Activated B cell treated with CpG ODN at 0.5 μM for 24 hours (primary cell): ENCODE measurements at regions of chr10 and their contacts with region 1.

Region 1: GRCh38 chr10:52215745-52216361 is 98.2 kb upstream of the DKK1 start:
- DNase-seq: no peak
- ATAC-seq: peak; percentile 57
- H3K4me3 Mint-ChIP-seq: peak overlapping the region; percentile 41
- H3K27ac Mint-ChIP-seq: no peak overlapping the region
- H3K4me1 Mint-ChIP-seq: peaks cover 32% of the 10 kb centered on the region
- H3K27me3 Mint-ChIP-seq: no peaks in the 10 kb centered on the region
- CTCF ChIP-seq: peak; percentile 40

Region 2: GRCh38 chr10:51001587-51001986 is 1214.3 kb before region 1 on chr10:
- CTCF ChIA-PET with region 1: interaction called, 5 read pairs
- POLR2A ChIA-PET with region 1: no interaction called
- intact Hi-C with region 1: loop called (anchors 1 kb)
- DNase-seq: no peak
- ATAC-seq: no peak
- H3K4me3 Mint-ChIP-seq: no peak overlapping the region
- H3K27ac Mint-ChIP-seq: no peak overlapping the region
- H3K4me1 Mint-ChIP-seq: no peaks in the 10 kb centered on the region
- H3K27me3 Mint-ChIP-seq: peaks cover 3% of the 10 kb centered on the region
- CTCF ChIP-seq: no peak

Region 3: GRCh38 chr10:51010977-51011376 is 1204.9 kb before region 1 on chr10:
- CTCF ChIA-PET with region 1: interaction called, 5 read pairs
- POLR2A ChIA-PET with region 1: no interaction called
- intact Hi-C with region 1: loop called (anchors 1 kb)
- DNase-seq: no peak
- ATAC-seq: no peak
- H3K4me3 Mint-ChIP-seq: no peak overlapping the region
- H3K27ac Mint-ChIP-seq: no peak overlapping the region
- H3K4me1 Mint-ChIP-seq: peaks cover 16% of the 10 kb centered on the region
- H3K27me3 Mint-ChIP-seq: peaks cover 5% of the 10 kb centered on the region
- CTCF ChIP-seq: no peak

Region 4: GRCh38 chr10:51389415-51390321 is 826.2 kb before region 1 on chr10:
- CTCF ChIA-PET with region 1: interaction called, 15 read pairs
- POLR2A ChIA-PET with region 1: no interaction called
- intact Hi-C with region 1: loop called (anchors 1 kb)
- DNase-seq: no peak
- ATAC-seq: peak; percentile 42
- H3K4me3 Mint-ChIP-seq: no peak overlapping the region
- H3K27ac Mint-ChIP-seq: no peak overlapping the region
- H3K4me1 Mint-ChIP-seq: no peaks in the 10 kb centered on the region
- H3K27me3 Mint-ChIP-seq: no peaks in the 10 kb centered on the region
- CTCF ChIP-seq: no peak

Region 5: GRCh38 chr10:51699475-51700227 is 516.2 kb before region 1 on chr10 and contains the start of gene CSTF2T:
- CTCF ChIA-PET with region 1: no interaction called
- POLR2A ChIA-PET with region 1: no interaction called
- intact Hi-C with region 1: loop called (anchors 10 kb)
- DNase-seq: peak; percentile 81
- ATAC-seq: peak; percentile 90
- H3K4me3 Mint-ChIP-seq: peak within 1 kb of the TSS; percentile 99
- H3K27ac Mint-ChIP-seq: peak within 1 kb of the TSS; percentile 100
- H3K4me1 Mint-ChIP-seq: peaks cover 52% of the 10 kb centered on the region
- H3K27me3 Mint-ChIP-seq: no peaks in the 10 kb centered on the region
- CTCF ChIP-seq: no peak
- total RNA-seq, gene CSTF2T: 39.3 and 40.8 TPM in 2 replicates

Region 6: DNA sequence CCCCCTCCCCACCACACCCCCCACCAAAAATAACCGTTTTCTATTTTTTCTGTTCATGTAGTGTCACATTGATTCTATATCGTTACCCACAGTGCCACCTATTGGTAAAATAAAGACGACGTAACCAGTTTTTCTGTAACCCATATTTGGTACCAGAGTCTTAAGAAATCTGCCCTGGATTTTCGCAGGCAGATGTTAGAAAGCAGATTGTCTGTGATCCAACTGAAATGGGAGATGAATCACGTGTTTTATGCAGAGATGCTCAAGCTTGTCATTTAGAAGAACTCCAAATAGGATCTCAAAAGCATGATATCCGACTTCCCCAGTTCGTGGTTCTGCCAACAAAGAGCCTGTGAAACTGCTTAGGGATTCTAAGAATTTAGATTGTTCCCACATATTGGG is 255.4 kb before region 1 on chr10:
- CTCF ChIA-PET with region 1: interaction called, 3 read pairs
- POLR2A ChIA-PET with region 1: no interaction called
- intact Hi-C with region 1: loop called (anchors 1 kb)
- DNase-seq: no peak
- ATAC-seq: no peak
- H3K4me3 Mint-ChIP-seq: no peak overlapping the region
- H3K27ac Mint-ChIP-seq: no peak overlapping the region
- H3K4me1 Mint-ChIP-seq: no peaks in the 10 kb centered on the region
- H3K27me3 Mint-ChIP-seq: no peaks in the 10 kb centered on the region
- CTCF ChIP-seq: peak; percentile 43

Region 7: GRCh38 chr10:52050429-52051047 is 165.3 kb before region 1 on chr10:
- CTCF ChIA-PET with region 1: no interaction called
- POLR2A ChIA-PET with region 1: no interaction called
- intact Hi-C with region 1: no loop called
- DNase-seq: no peak
- ATAC-seq: no peak
- H3K4me3 Mint-ChIP-seq: no peak overlapping the region
- H3K27ac Mint-ChIP-seq: no peak overlapping the region
- H3K4me1 Mint-ChIP-seq: no peaks in the 10 kb centered on the region
- H3K27me3 Mint-ChIP-seq: no peaks in the 10 kb centered on the region
- CTCF ChIP-seq: no peak

Region 8: DNA sequence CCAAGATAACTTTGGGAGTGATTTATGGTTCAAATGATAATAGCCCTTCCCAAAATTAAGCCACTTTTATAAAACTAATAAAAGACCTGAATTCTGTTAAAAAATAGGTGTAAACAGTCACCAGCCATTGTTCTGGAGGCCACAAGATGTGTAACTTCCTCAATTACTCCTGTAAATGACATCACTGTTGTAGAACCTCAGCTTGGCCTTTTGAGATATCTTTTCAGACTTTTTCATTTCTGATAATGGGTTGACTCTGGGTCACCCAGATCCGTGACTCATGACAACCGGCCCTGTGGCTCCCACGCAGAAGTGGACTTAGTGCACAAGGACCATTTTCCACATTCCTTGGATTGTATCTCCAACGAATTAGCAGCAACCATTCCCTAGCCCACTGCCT is 204.8 kb after region 1 on chr10:
- CTCF ChIA-PET with region 1: no interaction called
- POLR2A ChIA-PET with region 1: no interaction called
- intact Hi-C with region 1: no loop called
- DNase-seq: no peak
- ATAC-seq: no peak
- H3K4me3 Mint-ChIP-seq: no peak overlapping the region
- H3K27ac Mint-ChIP-seq: no peak overlapping the region
- H3K4me1 Mint-ChIP-seq: no peaks in the 10 kb centered on the region
- H3K27me3 Mint-ChIP-seq: no peaks in the 10 kb centered on the region
- CTCF ChIP-seq: no peak